Caco-2 (cell line): ENCODE measurements at regions of chr18 and their contacts with region 1.

Region 1: GRCh38 chr18:63137999-63138435 is 181.6 kb downstream of the BCL2 start:
- DNase-seq: no peak
- H3K4me3 ChIP-seq: no peak overlapping the region
- H3K4me3 Mint-ChIP-seq: no peak overlapping the region
- H3K27ac Mint-ChIP-seq: no peak overlapping the region
- H3K4me1 ChIP-seq: no peaks in the 10 kb centered on the region
- H3K4me1 Mint-ChIP-seq: peaks cover 14% of the 10 kb centered on the region
- H3K27me3 ChIP-seq: no peaks in the 10 kb centered on the region
- H3K27me3 Mint-ChIP-seq: no peaks in the 10 kb centered on the region
- CTCF ChIP-seq: no peak

Region 2: GRCh38 chr18:63161761-63162195 is 23.8 kb after region 1 on chr18:
- CTCF ChIA-PET with region 1: no interaction called
- POLR2A ChIA-PET with region 1: no interaction called
- intact Hi-C with region 1: loop called (anchors 2 kb)
- DNase-seq: peak; percentile 29 to 51
- H3K4me3 ChIP-seq: no peak overlapping the region
- H3K4me3 Mint-ChIP-seq: no peak overlapping the region
- H3K27ac Mint-ChIP-seq: peak overlapping the region; percentile 58
- H3K4me1 ChIP-seq: no peaks in the 10 kb centered on the region; the same call in 1 of the 2 replicates
- H3K4me1 Mint-ChIP-seq: peaks cover 21% of the 10 kb centered on the region
- H3K27me3 ChIP-seq: no peaks in the 10 kb centered on the region
- H3K27me3 Mint-ChIP-seq: no peaks in the 10 kb centered on the region
- CTCF ChIP-seq: no peak

Region 3: GRCh38 chr18:63224630-63225029 is 86.6 kb after region 1 on chr18:
- CTCF ChIA-PET with region 1: no interaction called
- POLR2A ChIA-PET with region 1: no interaction called
- intact Hi-C with region 1: no loop called
- DNase-seq: no peak
- H3K4me3 ChIP-seq: no peak overlapping the region
- H3K4me3 Mint-ChIP-seq: no peak overlapping the region
- H3K27ac Mint-ChIP-seq: no peak overlapping the region
- H3K4me1 ChIP-seq: no peaks in the 10 kb centered on the region
- H3K4me1 Mint-ChIP-seq: no peaks in the 10 kb centered on the region
- H3K27me3 ChIP-seq: no peaks in the 10 kb centered on the region
- H3K27me3 Mint-ChIP-seq: no peaks in the 10 kb centered on the region
- CTCF ChIP-seq: no peak